ENCODE measurements at regions of chr20 and their contacts with region 1.

Region 1: GRCh38 chr20:36754656-36755222 is 8.8 kb upstream of the NDRG3 start:
- DNase-seq: no peak

Region 2: DNA sequence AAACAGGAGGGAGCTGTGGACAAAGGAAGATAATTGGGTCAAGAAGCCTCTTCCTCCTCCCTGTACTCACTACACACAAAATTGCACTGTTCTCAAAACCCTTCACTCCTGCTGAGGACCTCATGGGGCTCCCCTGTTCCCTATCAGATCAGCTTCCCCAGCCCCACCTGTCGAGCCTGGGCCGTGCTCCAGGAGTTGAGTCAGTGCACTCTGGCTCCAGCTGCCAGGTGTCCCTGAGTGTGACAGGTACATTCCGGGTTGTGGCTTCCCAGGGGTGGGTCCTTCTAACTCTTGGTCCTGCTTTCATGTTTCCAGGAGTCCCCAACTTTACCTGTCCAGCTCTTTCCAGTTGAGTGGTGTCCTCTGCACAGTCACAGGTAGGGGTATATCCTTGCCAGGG is 140.8 kb before region 1 on chr20:
- intact Hi-C with region 1: loop called (anchors 10 kb)
- DNase-seq: no peak

Region 3: GRCh38 chr20:36629719-36630681 is 124.7 kb before region 1 on chr20:
- intact Hi-C with region 1: no loop called
- DNase-seq: no peak

Region 4: DNA sequence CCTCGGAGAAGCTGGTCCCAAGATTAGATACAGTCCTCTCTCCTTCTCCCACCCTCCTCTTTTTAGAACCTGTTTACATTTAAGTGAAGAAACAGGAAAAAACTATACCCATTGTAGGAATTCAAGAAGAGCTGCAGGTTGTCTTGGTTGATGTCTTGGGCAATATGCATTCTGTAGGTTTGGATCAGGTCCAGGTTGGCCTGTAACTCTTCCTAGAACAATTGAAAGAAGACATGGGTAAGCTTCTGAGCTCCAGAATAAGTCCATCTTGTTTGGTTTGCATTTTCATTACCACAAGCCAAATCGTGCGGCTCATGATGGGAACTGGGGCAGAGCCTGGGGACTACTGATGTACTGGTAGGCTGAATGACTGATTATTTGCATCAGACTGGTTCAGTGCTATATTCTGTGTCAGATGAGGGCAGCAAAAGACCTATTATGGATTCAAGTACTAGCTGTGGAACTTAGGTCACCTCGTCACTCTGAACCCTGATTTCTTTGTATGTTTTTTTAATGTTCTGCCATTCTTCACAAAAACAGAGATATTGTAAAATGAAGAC is 88.5 kb before region 1 on chr20:
- intact Hi-C with region 1: loop called (anchors 5 kb)
- DNase-seq: no peak

Region 5: DNA sequence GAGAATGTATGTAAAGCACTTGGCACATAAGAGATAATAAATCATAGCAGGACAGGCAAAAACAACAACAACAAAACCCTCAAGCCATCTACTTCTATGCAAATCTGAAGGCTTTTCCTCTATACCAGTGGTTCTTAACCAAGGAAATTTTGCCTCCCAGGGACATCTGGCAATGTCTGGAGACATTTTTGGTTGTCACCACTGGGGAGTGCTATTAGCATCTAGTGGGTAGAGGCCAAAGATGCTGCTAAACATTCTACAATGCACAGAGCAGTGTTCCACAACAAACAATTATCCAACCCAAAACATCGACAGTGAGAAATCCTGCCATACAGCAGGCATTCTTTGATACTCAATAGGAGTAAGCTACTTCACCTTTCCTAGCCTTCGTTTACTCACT is 37.1 kb before region 1 on chr20:
- intact Hi-C with region 1: loop called (anchors 5 kb)
- DNase-seq: no peak

Region 6: GRCh38 chr20:36975099-36975818 is 220.5 kb after region 1 on chr20:
- intact Hi-C with region 1: no loop called
- DNase-seq: no peak